Calu3 (cell line): ENCODE measurements at regions of chr15 and their contacts with region 1.

Region 1: GRCh38 chr15:51620641-51621040 is 1.9 kb downstream of the DMXL2 start:
- DNase-seq: no peak
- H3K4me3 Mint-ChIP-seq: no peak overlapping the region
- H3K27ac Mint-ChIP-seq: no peak overlapping the region
- H3K4me1 Mint-ChIP-seq: peaks cover 18% of the 10 kb centered on the region
- H3K27me3 Mint-ChIP-seq: no peaks in the 10 kb centered on the region
- CTCF ChIP-seq: no peak

Region 2: GRCh38 chr15:51536965-51537574 is 83.6 kb before region 1 on chr15:
- CTCF ChIA-PET with region 1: interaction called, 4 read pairs
- intact Hi-C with region 1: loop called (anchors 1 kb)
- DNase-seq: peak; percentile 4
- H3K4me3 Mint-ChIP-seq: no peak overlapping the region
- H3K27ac Mint-ChIP-seq: no peak overlapping the region
- H3K4me1 Mint-ChIP-seq: no peaks in the 10 kb centered on the region
- H3K27me3 Mint-ChIP-seq: no peaks in the 10 kb centered on the region
- CTCF ChIP-seq: no peak

Region 3: GRCh38 chr15:51782357-51782896 is 161.8 kb after region 1 on chr15:
- CTCF ChIA-PET with region 1: no interaction called
- intact Hi-C with region 1: no loop called
- DNase-seq: peak; percentile 12
- H3K4me3 Mint-ChIP-seq: no peak overlapping the region
- H3K27ac Mint-ChIP-seq: no peak overlapping the region
- H3K4me1 Mint-ChIP-seq: no peaks in the 10 kb centered on the region
- H3K27me3 Mint-ChIP-seq: no peaks in the 10 kb centered on the region
- CTCF ChIP-seq: no peak